ENCODE measurements at regions of chr2 and their contacts with region 1.

Region 1: DNA sequence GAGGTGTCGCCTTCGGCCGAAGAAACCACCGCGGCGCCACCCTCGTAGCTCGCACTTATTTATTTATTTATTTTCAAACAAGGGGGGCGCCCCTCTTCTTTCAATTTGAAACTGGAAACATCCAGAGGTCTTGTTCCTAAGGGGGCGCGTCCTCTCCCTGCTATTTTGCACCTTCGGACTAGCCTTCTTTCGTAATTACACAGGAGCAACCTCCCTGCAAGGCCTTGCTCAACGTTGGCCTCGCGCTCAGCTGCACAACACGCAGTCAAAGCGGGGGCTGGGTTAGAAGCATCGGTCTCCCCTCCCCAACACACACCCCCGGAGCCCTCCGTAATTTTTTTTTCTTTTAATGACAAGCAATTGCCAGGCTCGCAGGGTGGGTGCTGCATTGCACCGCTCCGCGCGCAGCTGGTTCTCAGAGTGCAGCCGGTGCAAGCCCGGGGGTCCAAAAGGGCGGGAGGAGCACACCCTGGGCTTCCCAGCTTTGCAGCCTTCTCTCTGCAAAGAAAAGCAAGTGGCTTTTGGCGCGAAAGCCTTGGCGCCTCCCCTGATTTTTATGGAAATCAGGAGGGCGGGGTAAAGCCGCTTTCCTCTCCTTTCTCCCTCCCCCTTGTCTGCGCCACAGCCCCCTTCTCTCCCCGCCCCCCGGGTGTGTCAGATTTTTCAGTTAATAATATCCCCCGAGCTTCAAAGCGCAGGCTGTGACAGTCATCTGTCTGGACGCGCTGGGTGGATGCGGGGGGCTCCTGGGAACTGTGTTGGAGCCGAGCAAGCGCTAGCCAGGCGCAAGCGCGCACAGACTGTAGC is at the start of gene MYCN:
- DNase-seq: no peak
- ATAC-seq: peak; percentile 19
- total RNA-seq, gene MYCN: 0.54 TPM

Region 2: GRCh38 chr2:16218625-16219024 is 278.6 kb after region 1 on chr2:
- intact Hi-C with region 1: loop called (anchors 10 kb)
- DNase-seq: no peak
- ATAC-seq: no peak

Region 3: GRCh38 chr2:16281451-16282336 is 341.6 kb after region 1 on chr2:
- intact Hi-C with region 1: loop called (anchors 1 kb)
- DNase-seq: no peak
- ATAC-seq: peak; percentile 48

Region 4: GRCh38 chr2:16487686-16488085 is 547.6 kb after region 1 on chr2:
- intact Hi-C with region 1: loop called (anchors 5 kb)
- DNase-seq: no peak
- ATAC-seq: no peak

Region 5: DNA sequence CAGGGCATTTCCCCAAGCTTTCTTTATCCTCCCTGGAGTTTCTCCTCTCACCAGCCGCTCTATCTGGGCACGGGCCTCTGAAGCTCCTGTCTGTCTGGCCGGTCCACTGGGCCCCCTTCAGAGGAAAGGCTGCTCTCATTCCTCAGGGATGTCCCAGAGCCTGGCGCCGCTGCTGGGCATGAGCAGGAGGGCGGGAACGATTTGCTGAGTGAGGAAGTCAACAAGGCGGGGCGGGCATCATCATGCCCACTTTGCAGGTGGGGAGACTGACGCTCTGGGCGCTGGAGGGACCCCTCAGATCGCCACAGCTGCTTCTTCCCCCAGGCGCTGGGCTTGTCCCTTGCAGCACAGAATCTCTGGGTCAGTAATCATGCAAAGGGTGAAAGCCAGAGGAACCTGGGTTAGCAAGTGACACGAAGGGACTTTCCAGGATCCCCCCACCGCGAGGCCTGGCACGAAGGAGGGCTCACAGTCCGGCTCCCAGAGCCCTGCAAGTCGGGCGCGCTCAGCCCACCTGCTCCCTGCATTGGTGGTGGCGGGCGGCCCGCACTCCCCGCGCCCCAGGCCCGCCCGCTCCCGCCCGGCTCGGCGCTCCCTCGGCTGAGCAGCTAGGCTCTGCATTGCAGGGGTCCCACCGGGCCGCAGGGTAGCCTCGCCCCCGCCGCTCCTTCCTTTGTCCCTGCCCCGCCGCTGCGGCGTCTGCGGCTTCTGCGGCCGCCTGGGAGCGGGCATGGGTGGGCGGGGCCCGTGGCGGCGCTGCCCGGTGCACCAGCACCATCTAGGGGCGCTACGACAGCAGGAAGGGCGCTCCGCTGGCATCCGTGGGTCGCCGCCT is 567.8 kb after region 1 on chr2:
- intact Hi-C with region 1: loop called (anchors 5 kb)
- DNase-seq: peak; percentile 56
- ATAC-seq: peak; percentile 82